IMR-90 (cell line): ENCODE measurements at regions of chr5 and their contacts with region 1.

Region 1: GRCh38 chr5:19853616-19854240 is 134.3 kb downstream of the CDH18 start:
- DNase-seq: peak; percentile 74
- ATAC-seq: peak; percentile 81
- H3K4me3 ChIP-seq: no peak overlapping the region
- H3K27ac ChIP-seq: no peak overlapping the region
- H3K4me1 ChIP-seq: peaks cover 6% of the 10 kb centered on the region
- H3K27me3 ChIP-seq: no peaks in the 10 kb centered on the region
- CTCF ChIP-seq: no peak
- POLR2A ChIP-seq: no peak
- RAD21 ChIP-seq: no peak

Region 2: GRCh38 chr5:19928562-19929421 is 75.1 kb after region 1 on chr5:
- CTCF ChIA-PET with region 1: no interaction called
- POLR2A ChIA-PET with region 1: no interaction called
- dilution Hi-C with region 1: no loop called
- in situ Hi-C with region 1: no loop called
- intact Hi-C with region 1: loop called (anchors 5 kb)
- DNase-seq: peak; percentile 92
- ATAC-seq: peak; percentile 80
- H3K4me3 ChIP-seq: no peak overlapping the region
- H3K27ac ChIP-seq: peak overlapping the region; percentile 40; the same call in 1 of the 2 replicates
- H3K4me1 ChIP-seq: peaks cover 4% of the 10 kb centered on the region
- H3K27me3 ChIP-seq: no peaks in the 10 kb centered on the region
- CTCF ChIP-seq: no peak
- POLR2A ChIP-seq: no peak
- RAD21 ChIP-seq: no peak